GM10248 (cell line): ENCODE measurements at regions of chr15 and their contacts with region 1.

Region 1: DNA sequence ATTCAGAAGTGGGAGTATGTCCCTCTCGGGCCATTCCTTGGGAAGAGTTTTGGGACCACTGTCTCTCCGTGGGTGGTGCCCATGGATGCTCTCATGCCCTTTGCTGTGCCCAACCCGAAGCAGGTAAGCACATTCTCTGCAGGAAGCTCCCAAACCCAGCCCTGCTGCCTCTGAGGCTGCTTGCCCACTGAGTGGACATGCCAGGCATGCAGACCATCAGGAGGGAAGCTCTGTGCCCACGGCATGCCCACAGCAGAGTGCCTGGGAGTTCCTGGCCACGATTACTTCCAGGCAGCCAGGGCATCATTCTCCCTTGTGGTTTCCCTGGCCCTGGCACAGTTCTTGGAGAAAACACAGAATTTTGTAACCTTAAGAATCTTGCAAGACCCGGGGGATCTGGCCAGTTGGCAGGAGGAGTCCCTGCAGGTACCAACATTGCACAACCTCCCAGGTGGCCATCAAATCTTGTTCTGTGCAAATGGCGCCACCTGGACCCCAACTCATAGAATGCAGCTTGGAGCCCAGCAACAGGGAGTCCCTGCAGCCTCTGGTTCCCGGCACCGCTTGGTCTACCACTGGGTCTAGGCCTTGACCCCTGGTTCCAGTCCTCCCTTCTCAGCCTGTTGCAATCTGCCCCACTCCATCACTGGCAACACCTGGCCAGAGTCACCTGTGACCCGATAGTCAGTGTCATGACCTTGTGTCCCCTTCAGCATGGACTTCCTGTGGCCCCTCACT is 20.4 kb downstream of the FAH start:
- DNase-seq: peak; percentile 81
- CTCF ChIP-seq: peak; percentile 90

Region 2: DNA sequence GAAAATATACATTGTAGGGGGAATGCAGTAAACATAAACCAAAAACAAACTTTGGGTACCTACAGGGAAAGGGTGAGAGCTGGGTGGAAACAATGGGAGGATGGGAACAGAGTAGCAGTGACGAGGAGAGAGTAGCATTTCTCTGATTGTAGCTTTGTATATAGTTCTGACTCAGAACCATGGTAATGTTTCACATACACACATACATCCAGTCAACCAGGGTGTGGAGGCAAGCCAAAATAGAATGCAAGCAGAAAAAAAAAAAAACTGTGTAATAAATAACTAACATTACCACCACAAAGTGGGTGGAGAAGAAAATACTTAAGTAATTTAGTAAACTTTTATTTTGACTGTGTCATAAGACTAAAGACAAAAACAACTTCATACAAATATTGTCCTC is 229.4 kb before region 1 on chr15:
- CTCF ChIA-PET with region 1: no interaction called
- POLR2A ChIA-PET with region 1: no interaction called
- DNase-seq: peak; percentile 59
- CTCF ChIP-seq: no peak

Region 3: GRCh38 chr15:80160570-80161156 is 12.5 kb before region 1 on chr15:
- CTCF ChIA-PET with region 1: interaction called, 11 read pairs
- POLR2A ChIA-PET with region 1: no interaction called
- DNase-seq: peak; percentile 55
- CTCF ChIP-seq: no peak

Region 4: DNA sequence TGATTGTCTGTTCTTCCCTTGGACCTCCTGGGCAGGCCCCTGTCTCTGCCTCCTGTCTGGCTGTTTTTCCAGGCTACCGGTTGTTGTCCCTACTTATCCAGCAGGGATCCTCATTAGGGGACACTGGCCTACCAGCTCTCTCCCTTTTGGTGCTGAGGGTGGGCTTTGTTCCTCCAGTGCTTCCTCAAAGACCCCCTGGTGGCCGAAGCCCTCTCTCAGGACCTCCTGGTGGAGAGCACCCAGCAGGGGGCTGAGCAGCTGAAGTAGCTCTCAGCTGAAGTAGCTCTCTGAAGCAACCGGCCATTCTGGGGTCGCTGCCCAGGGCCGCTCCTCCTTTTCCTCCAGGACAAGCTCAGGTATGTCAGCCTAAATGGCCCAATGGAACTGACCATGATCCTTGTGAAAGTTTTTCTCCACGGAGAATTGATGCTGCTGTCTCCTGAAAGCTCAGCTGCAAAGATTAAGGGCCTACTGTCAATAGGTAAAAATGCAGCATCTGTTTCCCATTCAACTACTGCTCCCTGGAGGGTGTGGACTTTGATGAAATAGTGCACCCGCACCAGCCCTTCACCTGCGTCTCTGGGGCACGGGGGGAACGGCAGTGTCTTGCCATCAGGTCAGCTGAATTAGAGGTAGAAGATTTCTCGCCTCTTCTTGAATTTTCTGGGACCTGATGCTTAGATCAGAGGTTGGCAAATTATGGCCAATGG is 258.6 kb after region 1 on chr15:
- CTCF ChIA-PET with region 1: no interaction called
- POLR2A ChIA-PET with region 1: no interaction called
- DNase-seq: no peak
- CTCF ChIP-seq: no peak